ENCODE measurements at regions of chr17 and their contacts with region 1.

Region 1: GRCh38 chr17:82698065-82698973 is at the start of gene RAB40B:
- DNase-seq: peak; percentile 99 to 100
- H3K4me3 ChIP-seq: peak within 1 kb of the TSS; percentile 77
- H3K4me3 Mint-ChIP-seq: peak within 1 kb of the TSS; percentile 84
- H3K27ac Mint-ChIP-seq: peak within 1 kb of the TSS; percentile 61
- H3K4me1 ChIP-seq: peaks cover 19% of the 10 kb centered on the region
- H3K4me1 Mint-ChIP-seq: peaks cover 4% of the 10 kb centered on the region
- H3K27me3 ChIP-seq: no peaks in the 10 kb centered on the region
- H3K27me3 Mint-ChIP-seq: no peaks in the 10 kb centered on the region
- CTCF ChIP-seq: no peak
- total RNA-seq, gene RAB40B: 6.3 and 8.8 TPM in 2 replicates

Region 2: DNA sequence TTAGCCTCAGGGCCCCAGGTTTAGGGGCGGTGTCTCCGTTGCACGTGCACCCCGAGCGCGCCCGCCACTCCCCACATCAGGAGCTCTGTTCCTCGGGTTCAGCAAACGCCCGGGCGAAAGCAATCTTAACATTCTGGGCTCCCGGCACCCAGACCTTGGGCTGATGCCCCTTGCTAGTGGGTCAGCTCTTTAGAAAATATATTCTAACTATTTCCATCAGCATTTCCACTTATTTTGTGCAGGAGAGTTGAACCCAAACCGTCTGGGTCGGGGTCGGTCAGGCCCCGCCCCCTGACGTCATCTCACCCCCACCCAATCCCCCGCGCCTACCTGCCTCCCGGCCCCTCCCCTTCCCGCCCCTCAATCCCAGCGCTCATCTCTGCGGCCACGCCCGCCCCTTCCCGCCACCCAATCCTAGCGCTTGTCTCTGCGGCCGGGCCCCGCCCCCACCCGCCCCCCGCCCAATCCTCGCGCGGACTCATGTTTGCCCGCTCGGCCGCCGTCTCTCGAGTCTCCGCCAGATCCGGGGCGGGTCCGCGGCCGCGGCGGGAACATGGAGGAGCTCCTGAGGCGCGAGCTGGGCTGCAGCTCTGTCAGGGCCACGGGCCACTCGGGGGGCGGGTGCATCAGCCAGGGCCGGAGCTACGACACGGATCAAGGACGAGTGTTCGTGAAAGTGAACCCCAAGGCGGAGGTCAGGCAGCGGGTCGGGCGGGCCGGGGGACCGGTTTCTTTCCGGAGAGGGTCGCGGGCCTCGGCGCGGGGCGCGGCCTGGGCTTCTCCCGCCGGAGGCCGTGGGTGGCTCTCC is 18.1 kb after region 1 on chr17 and contains the start of gene FN3KRP:
- CTCF ChIA-PET with region 1: no interaction called
- POLR2A ChIA-PET with region 1: no interaction called
- intact Hi-C with region 1: loop called (anchors 2 kb)
- DNase-seq: peak; percentile 92 to 97
- H3K4me3 ChIP-seq: peak within 1 kb of the TSS; percentile 95
- H3K4me3 Mint-ChIP-seq: peak within 1 kb of the TSS; percentile 70
- H3K27ac Mint-ChIP-seq: peak within 1 kb of the TSS; percentile 24
- H3K4me1 ChIP-seq: no peaks in the 10 kb centered on the region
- H3K4me1 Mint-ChIP-seq: peaks cover 10% of the 10 kb centered on the region
- H3K27me3 ChIP-seq: no peaks in the 10 kb centered on the region
- H3K27me3 Mint-ChIP-seq: no peaks in the 10 kb centered on the region
- CTCF ChIP-seq: no peak
- total RNA-seq, gene FN3KRP: 47.2 and 53.6 TPM in 2 replicates